ENCODE measurements at regions of chr4 and their contacts with region 1.

Region 1: DNA sequence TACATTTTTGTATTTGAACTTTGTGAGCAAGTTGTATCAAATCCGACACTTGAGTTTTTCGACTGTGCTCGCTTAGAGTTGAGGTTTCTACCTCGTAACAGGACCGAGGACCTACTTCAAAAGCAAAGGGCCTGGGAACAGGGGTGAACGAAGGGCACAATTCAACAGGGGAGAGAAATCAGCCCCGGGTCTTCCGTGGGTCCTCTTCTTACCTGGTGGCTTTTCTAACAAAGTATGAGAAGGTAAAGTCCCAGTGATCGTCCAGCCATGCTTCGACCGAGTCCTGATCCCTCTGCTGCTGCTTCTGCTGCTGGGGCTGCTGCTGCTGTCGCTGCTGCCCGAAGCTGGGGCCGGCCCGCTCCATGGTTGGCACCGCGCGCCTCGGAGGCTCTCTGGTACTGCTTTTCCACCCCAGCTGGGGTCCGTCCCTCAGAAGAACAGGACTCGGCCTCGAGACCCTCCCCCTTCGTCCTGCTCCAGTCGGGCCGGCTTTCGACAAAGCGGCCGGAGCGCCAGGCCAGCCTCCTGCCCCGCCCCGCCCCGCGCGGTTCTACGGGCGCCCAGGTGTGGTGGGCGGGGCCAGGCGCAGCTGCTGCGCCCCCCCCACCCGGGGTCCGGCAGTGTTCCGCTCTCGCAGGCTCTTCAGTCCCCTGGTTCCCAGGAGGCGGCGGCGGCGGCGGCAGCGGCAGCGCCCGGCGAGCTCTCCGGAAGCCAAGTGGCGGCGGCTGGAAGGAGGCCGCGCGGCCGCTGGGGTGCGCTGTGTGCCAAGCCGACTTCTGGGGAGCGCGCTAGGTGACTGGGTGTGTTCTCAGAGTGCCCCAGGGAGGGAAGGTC is at the start of gene PDE5A:
- DNase-seq: peak; percentile 88
- H3K4me3 ChIP-seq: peak within 1 kb of the TSS; percentile 64
- H3K27ac ChIP-seq: peak within 1 kb of the TSS; percentile 91
- H3K4me1 ChIP-seq: peaks cover 5% of the 10 kb centered on the region
- H3K27me3 ChIP-seq: no peaks in the 10 kb centered on the region
- CTCF ChIP-seq: peak; percentile 67
- total RNA-seq, gene PDE5A: 17.6 to 42.5 TPM

Region 2: GRCh38 chr4:118981839-118982381 is 646.6 kb before region 1 on chr4:
- intact Hi-C with region 1: loop called (anchors 10 kb)
- DNase-seq: peak; percentile 69
- H3K4me3 ChIP-seq: no peak overlapping the region
- H3K27ac ChIP-seq: no peak overlapping the region
- H3K4me1 ChIP-seq: no peaks in the 10 kb centered on the region
- H3K27me3 ChIP-seq: no peaks in the 10 kb centered on the region
- CTCF ChIP-seq: peak; percentile 56

Region 3: DNA sequence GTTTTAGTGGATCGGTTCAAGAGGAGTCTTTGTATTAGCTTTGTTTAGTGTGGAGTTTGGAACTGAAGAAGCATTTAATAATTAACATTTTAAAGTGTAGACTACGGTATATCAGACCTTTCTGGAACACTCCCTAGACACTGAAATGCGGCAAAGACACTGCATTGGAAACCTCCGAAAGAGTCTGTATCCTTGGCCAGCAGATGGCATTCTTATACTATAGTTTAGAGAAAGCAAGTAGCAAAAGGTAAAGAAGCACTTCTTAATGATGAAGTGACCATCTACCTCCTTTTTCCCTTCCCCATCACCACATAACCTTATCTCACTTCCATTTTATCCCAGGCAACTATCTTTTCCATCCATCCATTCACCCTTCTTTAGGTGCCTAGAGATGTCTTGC is 314.2 kb before region 1 on chr4:
- intact Hi-C with region 1: loop called (anchors 10 kb)
- DNase-seq: no peak
- H3K4me3 ChIP-seq: no peak overlapping the region
- H3K27ac ChIP-seq: no peak overlapping the region
- H3K4me1 ChIP-seq: no peaks in the 10 kb centered on the region
- H3K27me3 ChIP-seq: no peaks in the 10 kb centered on the region
- CTCF ChIP-seq: no peak

Region 4: GRCh38 chr4:119559044-119559647 is 69.4 kb before region 1 on chr4:
- intact Hi-C with region 1: loop called (anchors 5 kb)
- DNase-seq: no peak
- H3K4me3 ChIP-seq: no peak overlapping the region
- H3K27ac ChIP-seq: no peak overlapping the region
- H3K4me1 ChIP-seq: no peaks in the 10 kb centered on the region
- H3K27me3 ChIP-seq: no peaks in the 10 kb centered on the region
- CTCF ChIP-seq: peak; percentile 41

Region 5: GRCh38 chr4:119785963-119786362 is 157.4 kb after region 1 on chr4:
- intact Hi-C with region 1: loop called (anchors 5 kb)
- DNase-seq: no peak
- H3K4me3 ChIP-seq: no peak overlapping the region
- H3K27ac ChIP-seq: no peak overlapping the region
- H3K4me1 ChIP-seq: no peaks in the 10 kb centered on the region
- H3K27me3 ChIP-seq: no peaks in the 10 kb centered on the region
- CTCF ChIP-seq: peak; percentile 27

Region 6: DNA sequence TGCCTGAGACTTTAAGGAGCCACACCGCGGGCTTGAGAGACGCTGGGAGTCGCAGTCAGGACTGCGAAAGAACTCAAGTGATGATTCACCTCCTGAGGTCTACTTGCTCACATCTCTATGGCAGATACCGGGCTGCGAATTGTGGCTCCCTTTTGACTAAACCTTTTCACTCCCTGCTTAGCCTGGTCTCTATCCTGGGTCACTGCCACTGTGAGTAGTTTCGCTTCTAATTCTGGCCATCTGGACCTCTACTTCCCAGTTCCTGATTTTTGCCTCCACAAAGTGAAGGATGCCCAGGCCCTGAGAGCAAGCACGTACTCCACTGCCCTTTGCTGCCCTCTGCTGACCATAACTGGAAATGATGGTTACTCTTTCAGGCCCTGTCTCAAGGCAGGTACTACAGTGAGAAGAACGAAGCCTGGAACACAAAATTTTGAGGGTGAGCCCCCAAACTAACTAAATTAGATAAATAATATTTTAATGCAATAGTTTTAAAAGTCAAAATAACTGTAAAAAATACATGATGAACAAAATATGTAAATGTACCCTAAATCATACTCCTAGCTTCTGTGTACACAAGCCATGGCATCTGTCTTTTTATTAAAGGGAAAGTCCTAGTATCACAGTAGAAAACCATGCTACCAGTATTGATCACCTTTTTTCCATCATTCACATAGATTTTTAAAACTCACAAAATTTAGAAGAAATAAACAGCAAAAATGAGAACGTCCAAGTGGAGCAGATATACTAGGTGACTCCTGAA is 421.4 kb after region 1 on chr4:
- intact Hi-C with region 1: loop called (anchors 2 kb)
- DNase-seq: peak; percentile 90
- H3K4me3 ChIP-seq: no peak overlapping the region
- H3K27ac ChIP-seq: peak overlapping the region; percentile 34
- H3K4me1 ChIP-seq: no peaks in the 10 kb centered on the region
- H3K27me3 ChIP-seq: no peaks in the 10 kb centered on the region
- CTCF ChIP-seq: peak; percentile 81